Heart left ventricle (tissue), 16 donors: ENCODE measurements at regions of chr17 and their contacts with region 1.

Region 1: DNA sequence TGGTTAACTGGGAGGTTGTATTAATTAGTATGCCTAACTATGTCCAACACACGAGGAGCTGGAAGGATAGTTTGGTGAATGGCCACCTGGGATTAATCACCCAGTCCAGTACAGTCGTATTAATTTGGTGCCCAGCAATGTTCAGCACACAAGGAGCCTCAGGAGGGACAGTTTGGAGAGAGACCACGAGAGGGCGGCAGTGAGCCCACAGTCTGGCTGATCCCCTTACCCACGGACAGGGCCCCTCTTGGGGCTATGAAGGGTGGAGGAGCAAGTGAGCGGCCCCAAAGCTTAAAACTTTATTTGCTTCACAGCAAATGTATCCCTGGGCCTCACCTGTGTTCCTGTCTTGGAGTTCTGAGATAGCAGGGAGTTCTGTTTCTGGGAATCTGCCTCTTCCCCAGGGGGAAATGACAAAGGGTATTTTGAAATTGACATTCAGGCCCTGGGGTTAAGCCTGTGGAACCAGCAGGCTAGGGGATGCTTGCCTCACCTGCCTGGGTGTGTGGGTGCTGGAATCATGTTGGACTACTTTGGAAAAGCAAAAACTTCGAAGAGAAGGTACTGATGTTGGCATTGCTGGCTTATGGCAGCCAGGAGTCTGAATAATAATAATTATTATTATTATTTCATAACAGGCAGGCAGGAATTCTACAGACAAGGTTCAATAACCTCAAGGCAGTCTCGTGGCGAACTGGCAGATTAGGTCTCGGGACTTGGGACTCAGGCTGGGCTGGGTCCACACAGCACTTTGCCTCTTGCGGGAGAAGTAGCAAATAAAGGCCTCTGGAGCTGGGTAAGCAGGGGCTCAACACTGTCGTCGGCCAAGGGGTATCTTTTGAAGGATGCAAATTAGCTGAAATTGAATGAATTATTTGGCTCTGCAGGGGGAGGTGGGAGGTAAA is 227.6 kb upstream of the ASIC2 start:
- DNase-seq: peak in 4 of 5 donors; percentile 29 to 68 (median 39)
- ATAC-seq: peak in 2 of 4 donors; percentile 42 to 67
- H3K4me3 ChIP-seq: no peak overlapping the region
- H3K27ac ChIP-seq: no peak overlapping the region
- H3K4me1 ChIP-seq: no peaks in the 10 kb centered on the region
- H3K27me3 ChIP-seq: peaks cover 0 to 8% (median 0%) of the 10 kb centered on the region in 9 donors
- CTCF ChIP-seq: peak; percentile 55 to 81 (median 71)
- POLR2A ChIP-seq: no peak

Region 2: GRCh38 chr17:33038740-33039139 is 481.9 kb before region 1 on chr17:
- intact Hi-C with region 1: loop called in 4 of 10 experiments (anchors 5 to 10 kb)
- DNase-seq: peak; percentile 28 to 72 (median 35)
- ATAC-seq: peak; percentile 64 to 78 (median 68)
- H3K4me3 ChIP-seq: no peak overlapping the region
- H3K27ac ChIP-seq: peak overlapping the region in 1 of 12 donors; percentile 0
- H3K4me1 ChIP-seq: peaks cover 0 to 23% (median 15%) of the 10 kb centered on the region in 12 donors
- H3K27me3 ChIP-seq: peaks cover 0 to 23% (median 3%) of the 10 kb centered on the region in 9 donors
- CTCF ChIP-seq: peak; percentile 49 to 80 (median 65)
- POLR2A ChIP-seq: no peak

Region 3: DNA sequence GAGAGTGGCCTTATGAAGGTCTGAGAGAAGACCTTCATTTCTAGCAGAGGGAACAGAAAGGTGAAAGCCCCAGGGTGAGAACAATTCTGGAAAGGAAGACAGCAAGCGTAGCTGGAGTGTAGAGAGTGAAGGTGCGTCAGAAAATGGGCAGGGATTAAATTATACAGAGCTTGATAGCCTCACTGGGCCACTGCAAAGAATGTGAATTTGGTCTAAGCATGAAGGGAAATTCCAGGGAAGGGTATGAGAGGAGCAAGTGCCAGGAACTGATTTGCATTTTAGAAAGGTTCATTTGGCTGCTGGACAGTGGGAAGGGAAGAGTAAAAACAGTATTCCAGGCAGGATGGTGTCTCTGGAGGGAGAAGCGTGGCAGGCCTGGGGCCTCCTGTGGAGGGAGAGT is 46.5 kb after region 1 on chr17:
- intact Hi-C with region 1: loop called in 1 of 10 experiments (anchors 2 kb)
- DNase-seq: no peak
- ATAC-seq: no peak
- H3K4me3 ChIP-seq: no peak overlapping the region
- H3K27ac ChIP-seq: no peak overlapping the region
- H3K4me1 ChIP-seq: no peaks in the 10 kb centered on the region
- H3K27me3 ChIP-seq: peaks cover 0 to 3% (median 0%) of the 10 kb centered on the region in 9 donors
- CTCF ChIP-seq: no peak
- POLR2A ChIP-seq: no peak

Region 4: GRCh38 chr17:33674685-33675084 is 154.0 kb after region 1 on chr17:
- intact Hi-C with region 1: loop called (anchors 2 to 10 kb)
- DNase-seq: peak in 4 of 5 donors; percentile 41 to 59 (median 44)
- ATAC-seq: peak; percentile 73 to 88 (median 87)
- H3K4me3 ChIP-seq: no peak overlapping the region
- H3K27ac ChIP-seq: no peak overlapping the region
- H3K4me1 ChIP-seq: no peaks in the 10 kb centered on the region
- H3K27me3 ChIP-seq: peaks cover 0 to 8% (median 0%) of the 10 kb centered on the region in 9 donors
- CTCF ChIP-seq: peak; percentile 63 to 87 (median 80)
- POLR2A ChIP-seq: no peak

Region 5: GRCh38 chr17:33750943-33751701 is 230.4 kb after region 1 on chr17:
- intact Hi-C with region 1: loop called in 6 of 10 experiments (anchors 5 to 10 kb)
- DNase-seq: peak; percentile 41 to 68 (median 53)
- ATAC-seq: peak; percentile 58 to 83 (median 74)
- H3K4me3 ChIP-seq: peak overlapping the region in 4 of 12 donors; percentile 8 to 47 (median 25)
- H3K27ac ChIP-seq: no peak overlapping the region
- H3K4me1 ChIP-seq: peaks cover 0 to 4% (median 0%) of the 10 kb centered on the region in 12 donors
- H3K27me3 ChIP-seq: peaks cover 0 to 40% (median 11%) of the 10 kb centered on the region in 9 donors
- CTCF ChIP-seq: peak; percentile 87 to 99 (median 94)
- POLR2A ChIP-seq: no peak